Activated B cell treated with CpG ODN at 0.5 μM for 24 hours (primary cell): ENCODE measurements at regions of chr1 and their contacts with region 1.

Region 1: GRCh38 chr1:33472349-33472980 is at the start of gene ZSCAN20:
- DNase-seq: peak; percentile 76
- ATAC-seq: peak; percentile 97
- H3K4me3 Mint-ChIP-seq: peak within 1 kb of the TSS; percentile 83
- H3K27ac Mint-ChIP-seq: peak within 1 kb of the TSS; percentile 27
- H3K4me1 Mint-ChIP-seq: peaks cover 24% of the 10 kb centered on the region
- H3K27me3 Mint-ChIP-seq: no peaks in the 10 kb centered on the region
- CTCF ChIP-seq: no peak
- total RNA-seq, gene ZSCAN20: 3.6 and 3.7 TPM in 2 replicates

Region 2: GRCh38 chr1:32650752-32651460 is 821.6 kb before region 1 on chr1 and contains the start of gene RBBP4:
- CTCF ChIA-PET with region 1: no interaction called
- POLR2A ChIA-PET with region 1: no interaction called
- intact Hi-C with region 1: loop called (anchors 5 kb)
- DNase-seq: peak; percentile 99
- ATAC-seq: peak; percentile 82
- H3K4me3 Mint-ChIP-seq: peak within 1 kb of the TSS; percentile 97
- H3K27ac Mint-ChIP-seq: peak within 1 kb of the TSS; percentile 100
- H3K4me1 Mint-ChIP-seq: peaks cover 70% of the 10 kb centered on the region
- H3K27me3 Mint-ChIP-seq: no peaks in the 10 kb centered on the region
- CTCF ChIP-seq: no peak
- total RNA-seq, gene RBBP4: 228 and 241 TPM in 2 replicates

Region 3: GRCh38 chr1:33111970-33112369 is 360.5 kb before region 1 on chr1:
- CTCF ChIA-PET with region 1: no interaction called
- POLR2A ChIA-PET with region 1: no interaction called
- intact Hi-C with region 1: loop called (anchors 1 kb)
- DNase-seq: no peak
- ATAC-seq: no peak
- H3K4me3 Mint-ChIP-seq: no peak overlapping the region
- H3K27ac Mint-ChIP-seq: no peak overlapping the region
- H3K4me1 Mint-ChIP-seq: no peaks in the 10 kb centered on the region
- H3K27me3 Mint-ChIP-seq: no peaks in the 10 kb centered on the region
- CTCF ChIP-seq: no peak

Region 4: GRCh38 chr1:33181921-33182341 is 290.5 kb before region 1 on chr1 and contains the start of gene TRIM62:
- CTCF ChIA-PET with region 1: no interaction called
- POLR2A ChIA-PET with region 1: no interaction called
- intact Hi-C with region 1: loop called (anchors 5 kb)
- DNase-seq: peak; percentile 80
- ATAC-seq: peak; percentile 67
- H3K4me3 Mint-ChIP-seq: peak within 1 kb of the TSS; percentile 89
- H3K27ac Mint-ChIP-seq: peak within 1 kb of the TSS; percentile 79
- H3K4me1 Mint-ChIP-seq: peaks cover 21% of the 10 kb centered on the region
- H3K27me3 Mint-ChIP-seq: peaks cover 9% of the 10 kb centered on the region
- CTCF ChIP-seq: no peak
- total RNA-seq, gene TRIM62: 10.1 and 10.9 TPM in 2 replicates

Region 5: GRCh38 chr1:33349778-33350610 is 122.5 kb before region 1 on chr1:
- CTCF ChIA-PET with region 1: interaction called, 3 read pairs
- POLR2A ChIA-PET with region 1: no interaction called
- intact Hi-C with region 1: loop called (anchors 5 kb)
- DNase-seq: peak; percentile 77
- ATAC-seq: peak; percentile 88
- H3K4me3 Mint-ChIP-seq: peak overlapping the region; percentile 91
- H3K27ac Mint-ChIP-seq: peak overlapping the region; percentile 93
- H3K4me1 Mint-ChIP-seq: peaks cover 37% of the 10 kb centered on the region
- H3K27me3 Mint-ChIP-seq: no peaks in the 10 kb centered on the region
- CTCF ChIP-seq: no peak

Region 6: GRCh38 chr1:33430692-33431593 is 41.5 kb before region 1 on chr1 and contains the start of gene PHC2:
- CTCF ChIA-PET with region 1: interaction called, 4 read pairs
- POLR2A ChIA-PET with region 1: no interaction called
- intact Hi-C with region 1: loop called (anchors 1 kb)
- DNase-seq: peak; percentile 85
- ATAC-seq: peak; percentile 96
- H3K4me3 Mint-ChIP-seq: peak within 1 kb of the TSS; percentile 66
- H3K27ac Mint-ChIP-seq: no peak within 1 kb of the TSS
- H3K4me1 Mint-ChIP-seq: peaks cover 5% of the 10 kb centered on the region
- H3K27me3 Mint-ChIP-seq: peaks cover 6% of the 10 kb centered on the region
- CTCF ChIP-seq: no peak
- total RNA-seq, gene PHC2: 16.4 and 18.1 TPM in 2 replicates

Region 7: DNA sequence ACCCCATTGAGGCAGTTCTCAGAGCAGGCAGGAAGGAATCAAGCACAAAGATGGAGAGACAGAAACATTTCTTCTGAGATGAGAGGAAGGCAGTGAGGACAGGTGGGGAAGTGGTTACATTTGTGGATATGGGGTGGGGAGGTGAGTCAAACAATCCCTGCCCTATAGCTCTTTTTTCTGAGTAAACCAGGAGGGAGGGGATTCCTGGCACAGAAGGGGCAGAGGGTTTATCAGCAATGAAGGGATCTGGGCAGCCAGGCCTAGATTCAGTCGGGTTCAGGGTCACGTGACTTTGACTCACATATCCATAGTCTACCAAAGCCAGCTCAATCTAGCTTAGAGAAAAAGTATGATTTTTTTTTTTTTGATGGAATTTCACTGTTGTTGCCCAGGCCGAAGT is 25.9 kb before region 1 on chr1:
- CTCF ChIA-PET with region 1: no interaction called
- POLR2A ChIA-PET with region 1: no interaction called
- intact Hi-C with region 1: no loop called
- DNase-seq: no peak
- ATAC-seq: no peak
- H3K4me3 Mint-ChIP-seq: no peak overlapping the region
- H3K27ac Mint-ChIP-seq: no peak overlapping the region
- H3K4me1 Mint-ChIP-seq: no peaks in the 10 kb centered on the region
- H3K27me3 Mint-ChIP-seq: peaks cover 33% of the 10 kb centered on the region
- CTCF ChIP-seq: no peak

Region 8: GRCh38 chr1:33502726-33503125 is 30.3 kb after region 1 on chr1:
- CTCF ChIA-PET with region 1: no interaction called
- POLR2A ChIA-PET with region 1: no interaction called
- intact Hi-C with region 1: no loop called
- DNase-seq: no peak
- ATAC-seq: no peak
- H3K4me3 Mint-ChIP-seq: no peak overlapping the region
- H3K27ac Mint-ChIP-seq: no peak overlapping the region
- H3K4me1 Mint-ChIP-seq: peaks cover 9% of the 10 kb centered on the region
- H3K27me3 Mint-ChIP-seq: no peaks in the 10 kb centered on the region
- CTCF ChIP-seq: no peak

Region 9: GRCh38 chr1:33616773-33617172 is 144.3 kb after region 1 on chr1:
- CTCF ChIA-PET with region 1: no interaction called
- POLR2A ChIA-PET with region 1: no interaction called
- intact Hi-C with region 1: loop called (anchors 2 kb)
- DNase-seq: no peak
- ATAC-seq: no peak
- H3K4me3 Mint-ChIP-seq: no peak overlapping the region
- H3K27ac Mint-ChIP-seq: no peak overlapping the region
- H3K4me1 Mint-ChIP-seq: no peaks in the 10 kb centered on the region
- H3K27me3 Mint-ChIP-seq: peaks cover 28% of the 10 kb centered on the region
- CTCF ChIP-seq: no peak